ENCODE measurements at regions of chr12 and their contacts with region 1.

Region 1: DNA sequence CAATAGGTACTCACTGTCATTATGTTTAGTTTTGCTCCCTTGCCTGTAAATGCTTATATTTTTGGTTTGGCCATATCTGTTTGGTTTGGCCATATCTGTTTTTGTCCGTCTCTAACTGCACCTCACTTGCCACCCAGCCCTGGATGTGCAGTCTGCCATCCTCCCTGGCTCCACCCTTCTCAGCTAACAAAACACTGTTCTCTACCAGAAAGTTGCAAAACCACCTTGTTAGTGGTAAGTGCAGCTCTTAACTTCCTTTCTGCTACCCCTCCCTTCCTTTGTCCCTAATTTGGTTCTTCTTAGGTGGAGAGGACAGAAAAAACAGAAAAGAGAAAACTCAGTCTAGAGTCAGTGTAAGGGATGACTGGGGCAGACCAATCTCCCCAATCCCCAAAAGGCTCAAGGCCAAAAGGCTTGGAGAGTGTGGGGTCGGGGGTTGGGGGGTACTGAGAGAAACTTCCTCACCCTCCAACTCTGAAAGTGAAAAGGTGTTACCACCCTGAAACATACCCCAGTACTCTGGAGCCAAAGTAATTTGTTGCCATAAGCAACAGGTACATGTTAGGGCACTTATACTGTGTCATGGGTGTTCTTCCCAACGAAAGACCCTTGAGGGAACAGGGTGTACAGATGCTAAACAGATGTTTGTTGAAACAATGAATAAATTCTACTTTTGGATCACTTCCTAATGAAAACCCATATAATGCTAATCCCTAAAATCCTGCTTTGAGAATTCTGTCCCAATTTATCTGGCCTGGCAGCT is 5.0 kb downstream of the BIN2 start:
- DNase-seq: no peak
- H3K4me3 ChIP-seq: no peak overlapping the region
- H3K27ac ChIP-seq: no peak overlapping the region
- H3K4me1 ChIP-seq: peaks cover 52% of the 10 kb centered on the region
- H3K27me3 ChIP-seq: no peaks in the 10 kb centered on the region
- CTCF ChIP-seq: no peak

Region 2: DNA sequence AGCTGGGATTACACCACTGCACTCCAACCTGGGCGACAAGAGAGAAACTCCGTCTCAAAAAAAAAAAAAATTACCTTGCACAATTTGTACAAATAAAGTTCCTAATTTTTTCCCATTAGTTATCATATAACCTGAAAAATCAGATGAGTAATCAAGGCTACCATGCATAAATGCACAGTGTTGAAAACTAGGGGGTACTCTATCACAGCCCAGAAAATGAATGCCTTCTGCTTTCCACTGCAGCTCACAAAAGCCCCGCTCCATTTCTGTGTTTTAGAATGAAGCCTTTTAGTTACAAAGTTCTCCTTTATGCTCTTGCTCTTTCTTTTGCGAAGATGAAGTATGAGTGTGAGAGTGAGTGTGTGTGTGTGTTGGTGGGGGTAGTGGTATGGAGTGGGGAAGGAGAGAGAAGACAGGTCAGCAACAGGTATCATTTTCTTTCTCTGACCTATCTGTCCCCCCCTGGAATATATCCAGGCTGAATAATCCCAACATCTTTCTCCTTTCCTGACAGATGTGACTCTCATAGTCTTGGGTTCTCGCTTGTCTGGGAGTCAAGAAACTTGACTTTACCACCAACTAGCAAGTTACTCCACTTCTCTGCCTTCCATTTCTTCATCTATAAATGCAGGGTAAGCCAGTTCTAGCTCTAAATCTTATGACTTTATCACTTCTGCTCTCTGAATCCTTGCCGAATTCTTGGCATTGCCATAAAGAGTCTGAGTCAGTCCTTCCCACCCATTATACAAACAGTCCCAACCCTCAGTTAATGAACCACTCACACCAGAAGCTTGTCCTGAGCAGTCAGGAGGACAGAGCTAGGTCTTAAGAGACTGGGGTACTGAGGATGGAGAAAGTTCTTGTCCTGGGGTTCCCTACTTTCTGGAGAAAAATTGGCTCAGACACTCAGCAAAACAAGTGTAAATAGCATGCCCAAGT is 11.1 kb before region 1 on chr12:
- CTCF ChIA-PET with region 1: no interaction called
- POLR2A ChIA-PET with region 1: interaction called, 12 read pairs
- intact Hi-C with region 1: no loop called
- DNase-seq: peak; percentile 55 to 95
- H3K4me3 ChIP-seq: no peak overlapping the region
- H3K27ac ChIP-seq: peak overlapping the region; percentile 76
- H3K4me1 ChIP-seq: peaks cover 33% of the 10 kb centered on the region
- H3K27me3 ChIP-seq: no peaks in the 10 kb centered on the region
- CTCF ChIP-seq: no peak

Measured in PC-9 (cell line).